ENCODE measurements at regions of chr1 and their contacts with region 1.

Region 1: DNA sequence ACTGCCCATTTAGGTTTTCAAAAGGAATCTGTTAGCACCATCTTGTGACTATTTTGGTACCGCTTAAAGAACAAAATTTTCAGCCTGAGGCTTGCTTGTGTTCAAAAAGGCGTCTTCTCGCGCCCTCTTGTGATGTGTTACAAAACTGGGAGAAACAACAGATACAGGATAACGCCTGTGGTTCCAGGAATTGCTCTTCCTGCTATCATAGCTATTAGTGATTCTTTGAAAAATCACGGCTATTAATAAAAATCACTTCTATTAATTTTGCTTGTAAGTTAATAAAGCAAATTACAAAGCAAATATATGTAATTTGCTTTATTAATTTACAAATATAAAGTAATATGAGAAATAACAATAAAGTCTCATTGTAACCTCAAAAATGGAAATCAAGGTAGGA is 82.2 kb upstream of the ABCD3 start:
- DNase-seq: peak; percentile 88
- H3K4me3 ChIP-seq: no peak overlapping the region
- H3K27ac ChIP-seq: no peak overlapping the region
- H3K27me3 ChIP-seq: peaks cover 9% of the 10 kb centered on the region
- CTCF ChIP-seq: peak; percentile 86

Region 2: GRCh38 chr1:93980320-93981273 is 355.4 kb before region 1 on chr1:
- CTCF ChIA-PET with region 1: interaction called, 17 read pairs
- POLR2A ChIA-PET with region 1: no interaction called
- DNase-seq: no peak
- H3K4me3 ChIP-seq: no peak overlapping the region
- H3K27ac ChIP-seq: peak overlapping the region; percentile 49
- H3K27me3 ChIP-seq: no peaks in the 10 kb centered on the region
- CTCF ChIP-seq: peak; percentile 47

Region 3: GRCh38 chr1:94045465-94046056 is 290.4 kb before region 1 on chr1:
- CTCF ChIA-PET with region 1: interaction called, 472 read pairs
- POLR2A ChIA-PET with region 1: no interaction called
- DNase-seq: peak; percentile 83
- H3K4me3 ChIP-seq: peak overlapping the region; percentile 11; the same call in 1 of the 2 replicates
- H3K27ac ChIP-seq: peak overlapping the region; percentile 84
- H3K27me3 ChIP-seq: no peaks in the 10 kb centered on the region
- CTCF ChIP-seq: peak; percentile 69

Region 4: DNA sequence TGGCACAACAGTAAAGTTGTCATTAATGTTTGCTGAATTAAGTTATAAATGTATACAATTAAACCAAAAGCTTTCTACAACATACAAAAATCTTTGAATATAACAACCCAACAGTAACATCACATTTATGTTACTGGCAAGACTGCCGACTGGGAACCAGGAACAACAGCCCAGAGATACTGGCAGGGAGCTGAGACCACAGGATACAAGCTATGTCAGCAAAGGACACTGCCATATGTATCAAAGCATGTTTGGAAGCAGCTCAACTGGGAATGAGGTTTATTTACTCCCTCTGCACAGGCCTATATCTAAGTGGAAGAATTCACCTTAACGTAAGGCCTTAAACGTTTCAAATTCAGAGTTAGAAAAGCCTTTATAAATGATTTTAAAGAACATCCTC is 149.0 kb before region 1 on chr1:
- CTCF ChIA-PET with region 1: interaction called, 34 read pairs
- POLR2A ChIA-PET with region 1: no interaction called
- DNase-seq: no peak
- H3K4me3 ChIP-seq: no peak overlapping the region
- H3K27ac ChIP-seq: no peak overlapping the region
- H3K27me3 ChIP-seq: no peaks in the 10 kb centered on the region
- CTCF ChIP-seq: no peak

Region 5: DNA sequence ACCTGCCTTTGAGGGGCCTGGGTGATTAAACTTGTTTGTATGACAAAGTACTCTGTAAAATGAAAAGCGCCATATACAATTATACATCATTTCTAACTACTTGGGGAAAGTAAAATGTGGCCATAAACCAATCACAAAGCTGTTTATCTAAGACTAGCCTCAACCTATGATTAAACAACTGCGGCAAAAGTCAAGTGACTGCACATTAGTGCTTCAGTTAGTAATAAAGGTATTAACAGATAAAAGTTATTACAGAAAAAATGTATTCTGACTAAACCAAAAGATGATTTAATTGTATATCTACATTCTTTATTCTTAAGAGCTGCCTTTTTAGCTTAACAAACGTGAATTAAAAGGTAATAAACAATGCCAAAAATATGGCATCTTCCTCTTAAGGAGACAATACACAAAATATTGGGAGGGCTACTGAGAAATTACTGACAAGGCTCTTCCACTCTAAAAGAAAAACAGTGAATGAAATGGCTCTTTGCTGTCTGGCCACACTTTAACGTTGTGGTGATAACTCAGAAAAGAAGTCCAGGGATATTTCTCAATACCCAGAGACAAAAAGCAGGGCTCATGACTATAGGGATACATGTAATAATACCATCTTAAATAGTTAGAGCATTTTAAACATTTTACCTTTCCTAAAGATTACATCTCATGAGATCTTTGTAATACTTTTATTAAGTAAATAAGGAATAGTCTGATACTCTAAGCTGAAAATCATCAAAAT is 107.1 kb before region 1 on chr1:
- CTCF ChIA-PET with region 1: interaction called, 22 read pairs
- POLR2A ChIA-PET with region 1: no interaction called
- DNase-seq: no peak
- H3K4me3 ChIP-seq: no peak overlapping the region
- H3K27ac ChIP-seq: no peak overlapping the region
- H3K27me3 ChIP-seq: no peaks in the 10 kb centered on the region
- CTCF ChIP-seq: no peak

Region 6: GRCh38 chr1:94463765-94464330 is 127.9 kb after region 1 on chr1:
- CTCF ChIA-PET with region 1: interaction called, 108 read pairs
- POLR2A ChIA-PET with region 1: no interaction called
- DNase-seq: peak; percentile 21
- H3K4me3 ChIP-seq: no peak overlapping the region
- H3K27ac ChIP-seq: no peak overlapping the region
- H3K27me3 ChIP-seq: no peaks in the 10 kb centered on the region
- CTCF ChIP-seq: peak; percentile 71

Measured in AG04450 (cell line).